Activated CD8-positive, alpha-beta T cell treated with anti-CD3 and anti-CD28 coated beads, Interleukin-2, amount 10 ng/mL, durations not matched to agents 7 days and 5 days (primary cell): ENCODE measurements at regions of chr11 and their contacts with region 1.

Region 1: GRCh38 chr11:58654079-58654907 is 31.8 kb downstream of the CNTF start:
- DNase-seq: peak; percentile 81
- ATAC-seq: peak; percentile 100
- H3K4me3 Mint-ChIP-seq: no peak overlapping the region
- H3K27ac Mint-ChIP-seq: no peak overlapping the region
- H3K4me1 Mint-ChIP-seq: peaks cover 5% of the 10 kb centered on the region
- H3K27me3 Mint-ChIP-seq: no peaks in the 10 kb centered on the region

Region 2: DNA sequence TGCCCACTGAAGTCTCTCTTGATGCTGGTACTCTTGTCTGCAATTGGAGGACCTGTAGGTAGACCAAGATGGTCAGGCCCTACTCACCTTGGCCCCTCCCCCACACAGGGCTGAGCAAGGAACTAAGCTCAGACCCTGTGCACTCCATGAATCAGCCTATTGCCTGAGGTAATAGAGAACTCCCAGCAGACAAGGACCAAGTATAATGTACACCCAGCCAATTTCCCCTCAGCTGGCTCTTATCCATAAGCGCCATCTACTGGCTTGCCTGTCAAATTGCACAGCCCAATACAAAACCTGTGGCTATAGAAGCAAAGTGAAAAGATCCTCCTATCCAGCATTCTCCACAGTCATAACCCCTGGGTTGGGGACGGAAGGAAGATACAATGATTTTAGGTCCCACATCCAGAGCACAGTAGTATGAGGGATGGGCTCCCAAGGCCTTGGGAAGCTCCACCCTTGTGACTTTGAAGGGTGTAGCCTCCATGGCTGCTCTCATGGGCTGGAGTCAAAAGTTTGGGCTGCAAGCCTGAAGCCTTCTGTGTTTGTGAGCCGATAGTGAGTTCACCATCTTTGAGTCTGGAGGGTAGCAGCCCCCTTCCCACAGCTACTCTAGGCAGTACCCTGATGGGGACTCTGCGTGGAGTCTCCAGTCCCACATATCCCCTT is 134.2 kb after region 1 on chr11:
- CTCF ChIA-PET with region 1: interaction called, 14 read pairs
- POLR2A ChIA-PET with region 1: interaction called, 3 read pairs
- DNase-seq: peak; percentile 53
- ATAC-seq: peak; percentile 79
- H3K4me3 Mint-ChIP-seq: no peak overlapping the region
- H3K27ac Mint-ChIP-seq: no peak overlapping the region
- H3K4me1 Mint-ChIP-seq: no peaks in the 10 kb centered on the region
- H3K27me3 Mint-ChIP-seq: peaks cover 2% of the 10 kb centered on the region

Region 3: DNA sequence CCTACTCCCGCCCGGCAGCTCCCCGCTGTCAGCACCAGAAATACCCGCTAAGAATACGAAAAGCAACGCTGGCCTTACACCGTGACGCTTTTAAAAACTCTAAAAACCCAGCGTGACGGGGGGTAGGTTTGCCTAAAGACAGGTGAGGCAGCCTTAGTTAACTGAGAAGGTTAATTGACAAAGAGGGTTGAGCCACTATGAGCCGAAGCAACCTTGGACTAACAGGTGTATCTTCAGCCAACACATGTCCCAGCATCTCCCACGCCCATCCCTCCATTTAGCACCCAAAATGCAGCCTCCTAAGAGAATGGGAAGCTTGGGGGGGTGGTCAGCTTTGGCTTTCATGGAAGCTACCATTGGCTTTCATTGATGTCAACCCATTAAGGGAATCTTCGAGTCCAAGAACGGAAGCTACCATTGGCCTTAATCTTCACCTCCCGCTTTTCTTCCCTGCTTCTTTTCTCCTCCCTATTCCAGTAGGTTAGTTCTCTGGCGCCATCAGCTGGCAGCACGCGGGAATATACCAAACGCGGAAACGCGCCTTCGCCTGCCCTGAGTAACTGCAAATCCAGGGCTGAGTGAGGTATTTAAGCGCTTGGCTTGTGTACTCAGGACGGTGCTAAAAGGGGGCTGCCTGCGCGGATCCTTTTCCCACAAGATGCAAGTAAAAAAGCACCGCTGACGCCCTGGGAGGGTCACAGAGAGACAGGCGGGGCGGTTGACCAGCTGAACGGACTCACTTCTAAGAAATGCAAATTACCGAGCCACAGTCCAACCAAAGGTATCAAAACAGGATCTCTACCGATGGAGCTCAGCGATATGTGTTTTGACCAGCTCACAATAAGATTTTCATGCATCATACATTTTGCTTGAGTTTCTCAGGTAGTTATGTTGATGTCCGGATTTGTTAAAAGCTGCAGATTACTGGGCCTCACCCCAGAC is 246.5 kb after region 1 on chr11:
- CTCF ChIA-PET with region 1: interaction called, 11 read pairs
- POLR2A ChIA-PET with region 1: no interaction called
- DNase-seq: peak; percentile 53
- ATAC-seq: peak; percentile 51
- H3K4me3 Mint-ChIP-seq: no peak overlapping the region
- H3K27ac Mint-ChIP-seq: no peak overlapping the region
- H3K4me1 Mint-ChIP-seq: no peaks in the 10 kb centered on the region
- H3K27me3 Mint-ChIP-seq: peaks cover 38% of the 10 kb centered on the region

Region 4: DNA sequence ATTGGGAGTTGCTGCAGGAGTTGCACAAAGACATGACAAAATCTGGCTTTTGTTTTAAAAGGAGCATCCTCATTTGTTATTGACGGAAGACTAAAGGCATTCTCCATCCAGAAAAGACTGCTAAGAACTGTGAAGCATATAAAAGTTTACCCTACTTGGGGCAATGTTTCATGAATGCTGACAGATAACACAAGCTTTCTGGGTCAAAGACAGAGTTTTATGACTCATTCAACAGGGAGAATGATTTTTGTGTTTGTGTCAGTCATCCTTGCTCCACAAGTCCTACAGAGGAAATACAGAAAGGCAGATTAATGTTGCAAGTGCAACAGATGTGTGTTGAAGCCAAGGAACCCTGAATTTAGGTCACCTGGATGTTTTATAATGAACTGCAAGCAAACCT is 287.5 kb after region 1 on chr11:
- CTCF ChIA-PET with region 1: no interaction called
- POLR2A ChIA-PET with region 1: no interaction called
- DNase-seq: no peak
- ATAC-seq: no peak
- H3K4me3 Mint-ChIP-seq: no peak overlapping the region
- H3K27ac Mint-ChIP-seq: no peak overlapping the region
- H3K4me1 Mint-ChIP-seq: no peaks in the 10 kb centered on the region
- H3K27me3 Mint-ChIP-seq: peaks cover 2% of the 10 kb centered on the region